ENCODE measurements at regions of chr19 and their contacts with region 1.

Region 1: DNA sequence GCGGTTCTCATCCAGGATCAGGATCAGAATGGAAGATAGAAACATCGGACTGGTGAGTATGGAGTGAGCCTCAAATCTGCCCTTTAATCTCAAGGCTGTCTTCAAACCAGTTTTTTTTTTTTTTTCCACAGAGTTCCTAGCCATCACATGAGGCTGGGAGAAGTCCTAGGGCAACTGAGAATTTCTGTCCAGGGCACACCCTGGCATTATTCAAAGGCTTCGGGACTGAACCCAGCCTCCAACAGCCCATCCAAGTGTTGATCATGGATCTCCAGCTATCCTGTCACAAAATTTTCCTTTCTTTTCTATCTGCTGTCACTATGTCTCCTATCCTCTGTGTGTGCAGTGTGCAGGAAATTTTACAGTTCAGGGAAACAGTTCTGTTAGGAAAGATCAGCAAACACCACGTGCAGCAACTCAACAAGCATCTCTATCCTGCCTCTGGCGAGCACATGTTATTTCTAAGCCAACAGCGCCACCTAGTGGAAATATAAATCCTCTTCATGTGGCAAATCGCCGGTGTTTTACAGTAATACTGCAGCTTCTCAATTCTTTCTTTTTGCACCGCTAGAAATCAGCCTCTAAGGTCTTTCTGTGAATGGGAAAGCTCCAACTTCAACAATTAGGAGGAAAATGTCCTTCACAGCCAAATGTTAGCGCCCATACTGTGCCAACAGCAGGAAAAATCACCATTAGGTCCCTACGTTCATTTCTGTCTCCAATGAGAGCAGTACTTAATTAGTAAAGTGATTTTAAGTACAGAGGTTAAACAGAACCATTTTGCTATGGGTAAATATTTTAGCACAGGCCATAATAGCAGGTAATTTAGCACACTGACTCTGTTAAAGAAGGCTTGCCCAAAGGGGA is 21.4 kb upstream of the ZNF181 start:
- DNase-seq: peak; percentile 71
- ATAC-seq: peak; percentile 94
- H3K4me3 ChIP-seq: no peak overlapping the region
- H3K27ac ChIP-seq: no peak overlapping the region
- H3K4me1 ChIP-seq: no peaks in the 10 kb centered on the region
- H3K27me3 ChIP-seq: no peaks in the 10 kb centered on the region
- CTCF ChIP-seq: peak; percentile 50 to 83 (median 79)
- POLR2A ChIP-seq: no peak
- RAD21 ChIP-seq: peak; percentile 89

Region 2: GRCh38 chr19:34145741-34146202 is 566.9 kb before region 1 on chr19:
- CTCF ChIA-PET with region 1: no interaction called
- POLR2A ChIA-PET with region 1: no interaction called
- RAD21 ChIA-PET with region 1: no interaction called
- intact Hi-C with region 1: loop called (anchors 10 kb)
- DNase-seq: peak; percentile 33
- ATAC-seq: peak; percentile 83
- H3K4me3 ChIP-seq: no peak overlapping the region
- H3K27ac ChIP-seq: no peak overlapping the region
- H3K4me1 ChIP-seq: no peaks in the 10 kb centered on the region
- H3K27me3 ChIP-seq: no peaks in the 10 kb centered on the region
- CTCF ChIP-seq: peak; percentile 67 to 88 (median 84)
- POLR2A ChIP-seq: no peak
- RAD21 ChIP-seq: peak; percentile 80

Region 3: DNA sequence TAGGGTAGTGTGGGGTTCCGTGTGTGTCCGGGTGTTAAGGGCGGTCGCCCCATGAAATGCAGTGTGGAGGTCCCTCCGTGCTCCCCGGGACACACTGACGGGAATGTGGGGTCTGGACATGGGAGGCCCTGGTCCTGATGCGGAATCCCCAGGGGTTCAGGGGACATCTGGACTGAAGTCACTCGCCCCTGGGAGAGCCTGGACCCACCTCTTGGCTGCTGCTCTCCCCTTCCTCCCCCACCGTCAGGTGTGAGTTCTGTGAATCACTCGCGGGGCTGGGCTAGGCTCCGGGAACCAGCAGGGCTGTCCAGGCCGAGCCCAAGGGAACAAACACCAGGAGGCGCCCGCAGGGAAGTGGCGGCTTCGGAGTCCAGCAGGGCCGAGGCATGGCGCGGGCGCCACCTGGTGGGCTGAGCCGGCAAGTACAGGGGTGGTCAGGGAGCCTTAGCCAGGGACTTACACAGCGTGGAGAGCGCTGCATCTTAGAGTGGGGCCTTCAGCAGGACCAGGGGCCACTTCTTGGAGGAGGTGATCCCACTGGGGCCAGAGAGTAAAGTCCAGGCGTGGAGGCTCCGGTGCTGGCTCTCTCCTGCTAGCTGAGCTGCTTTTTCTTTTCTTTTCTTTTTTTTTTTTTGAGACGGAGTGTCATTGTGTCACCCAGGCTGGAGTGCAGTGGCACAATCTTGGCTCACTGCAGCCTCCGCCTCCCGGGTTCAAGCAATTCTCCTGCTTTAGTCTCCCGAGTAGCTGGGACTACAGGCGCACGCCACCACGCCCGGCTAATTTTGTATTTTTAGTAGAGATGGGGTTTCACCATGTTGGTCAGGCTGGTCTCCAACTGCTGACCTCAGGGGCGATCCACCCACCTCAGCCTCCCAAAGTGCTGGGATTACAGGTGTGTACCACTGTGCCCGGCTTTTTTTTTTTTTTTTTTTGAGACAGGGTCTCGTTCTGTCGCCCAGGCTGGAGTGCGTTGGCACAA is 211.0 kb before region 1 on chr19:
- CTCF ChIA-PET with region 1: no interaction called
- POLR2A ChIA-PET with region 1: no interaction called
- RAD21 ChIA-PET with region 1: no interaction called
- intact Hi-C with region 1: loop called (anchors 1 kb)
- DNase-seq: peak; percentile 69
- ATAC-seq: peak; percentile 96
- H3K4me3 ChIP-seq: no peak overlapping the region
- H3K27ac ChIP-seq: no peak overlapping the region
- H3K4me1 ChIP-seq: peaks cover 0 to 4% of the 10 kb centered on the region in 2 experiments; a peak in 2 of 4 replicates
- H3K27me3 ChIP-seq: no peaks in the 10 kb centered on the region
- CTCF ChIP-seq: peak; percentile 99 to 100 (median 99)
- POLR2A ChIP-seq: no peak
- RAD21 ChIP-seq: peak; percentile 91

Region 4: GRCh38 chr19:34556488-34556887 is 156.1 kb before region 1 on chr19:
- CTCF ChIA-PET with region 1: interaction called, 5 read pairs
- POLR2A ChIA-PET with region 1: no interaction called
- RAD21 ChIA-PET with region 1: no interaction called
- intact Hi-C with region 1: loop called (anchors 1 kb)
- DNase-seq: peak; percentile 10
- ATAC-seq: peak; percentile 82
- H3K4me3 ChIP-seq: no peak overlapping the region
- H3K27ac ChIP-seq: no peak overlapping the region
- H3K4me1 ChIP-seq: no peaks in the 10 kb centered on the region
- H3K27me3 ChIP-seq: peaks cover 23% of the 10 kb centered on the region; the same call in 1 of the 2 replicates
- CTCF ChIP-seq: peak; percentile 51 to 79 (median 70); a peak in 5 of 6 replicates
- POLR2A ChIP-seq: no peak
- RAD21 ChIP-seq: peak; percentile 64

Region 5: GRCh38 chr19:34639491-34640085 is 73.0 kb before region 1 on chr19:
- CTCF ChIA-PET with region 1: interaction called, 27 read pairs
- POLR2A ChIA-PET with region 1: no interaction called
- RAD21 ChIA-PET with region 1: interaction called in 1 of 2 experiments, 3 read pairs
- intact Hi-C with region 1: loop called (anchors 1 kb)
- DNase-seq: peak; percentile 53
- ATAC-seq: peak; percentile 78
- H3K4me3 ChIP-seq: no peak overlapping the region
- H3K27ac ChIP-seq: no peak overlapping the region
- H3K4me1 ChIP-seq: no peaks in the 10 kb centered on the region
- H3K27me3 ChIP-seq: no peaks in the 10 kb centered on the region
- CTCF ChIP-seq: peak; percentile 72 to 84 (median 79); a peak in 5 of 6 replicates
- POLR2A ChIP-seq: no peak
- RAD21 ChIP-seq: peak; percentile 84

Region 6: DNA sequence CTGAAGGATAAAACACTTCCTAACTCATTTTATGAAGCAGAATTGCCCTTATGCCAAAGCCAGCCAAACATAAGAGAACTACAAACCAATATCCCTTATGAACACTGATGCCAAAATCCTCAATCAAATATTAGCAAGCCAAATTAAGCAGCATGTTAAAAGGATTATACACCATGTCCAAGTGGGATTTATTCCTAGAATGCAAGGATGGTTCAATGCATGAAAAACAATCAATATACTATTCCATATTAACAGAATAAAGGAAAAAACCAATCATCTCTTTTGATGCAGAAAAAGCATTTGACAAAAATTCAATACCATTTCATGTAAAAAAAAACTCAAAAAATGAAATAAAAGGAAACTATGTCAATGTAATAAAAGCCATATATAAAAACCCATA is 240.5 kb after region 1 on chr19:
- CTCF ChIA-PET with region 1: no interaction called
- POLR2A ChIA-PET with region 1: no interaction called
- RAD21 ChIA-PET with region 1: no interaction called
- intact Hi-C with region 1: no loop called
- DNase-seq: no peak
- ATAC-seq: no peak
- H3K4me3 ChIP-seq: no peak overlapping the region
- H3K27ac ChIP-seq: no peak overlapping the region
- H3K4me1 ChIP-seq: no peaks in the 10 kb centered on the region
- H3K27me3 ChIP-seq: no peaks in the 10 kb centered on the region
- CTCF ChIP-seq: no peak
- POLR2A ChIP-seq: no peak
- RAD21 ChIP-seq: no peak

Region 7: GRCh38 chr19:35216871-35217648 is 504.4 kb after region 1 on chr19:
- CTCF ChIA-PET with region 1: no interaction called
- POLR2A ChIA-PET with region 1: no interaction called
- RAD21 ChIA-PET with region 1: no interaction called
- intact Hi-C with region 1: no loop called
- DNase-seq: no peak
- ATAC-seq: no peak
- H3K4me3 ChIP-seq: no peak overlapping the region
- H3K27ac ChIP-seq: no peak overlapping the region
- H3K4me1 ChIP-seq: peaks cover 18 to 36% of the 10 kb centered on the region in 2 experiments
- H3K27me3 ChIP-seq: no peaks in the 10 kb centered on the region
- CTCF ChIP-seq: no peak
- POLR2A ChIP-seq: no peak
- RAD21 ChIP-seq: peak; percentile 25; the same call in 1 of the 2 replicates

Measured in HCT116 (cell line).